ENCODE measurements at regions of chr3 and their contacts with region 1.

Region 1: GRCh38 chr3:117019082-117019713 is 309.6 kb downstream of the TUSC7 start:
- DNase-seq: peak; percentile 86 to 90
- H3K4me3 ChIP-seq: no peak overlapping the region
- H3K4me1 ChIP-seq: peaks cover 37% of the 10 kb centered on the region
- H3K27me3 ChIP-seq: no peaks in the 10 kb centered on the region

Region 2: DNA sequence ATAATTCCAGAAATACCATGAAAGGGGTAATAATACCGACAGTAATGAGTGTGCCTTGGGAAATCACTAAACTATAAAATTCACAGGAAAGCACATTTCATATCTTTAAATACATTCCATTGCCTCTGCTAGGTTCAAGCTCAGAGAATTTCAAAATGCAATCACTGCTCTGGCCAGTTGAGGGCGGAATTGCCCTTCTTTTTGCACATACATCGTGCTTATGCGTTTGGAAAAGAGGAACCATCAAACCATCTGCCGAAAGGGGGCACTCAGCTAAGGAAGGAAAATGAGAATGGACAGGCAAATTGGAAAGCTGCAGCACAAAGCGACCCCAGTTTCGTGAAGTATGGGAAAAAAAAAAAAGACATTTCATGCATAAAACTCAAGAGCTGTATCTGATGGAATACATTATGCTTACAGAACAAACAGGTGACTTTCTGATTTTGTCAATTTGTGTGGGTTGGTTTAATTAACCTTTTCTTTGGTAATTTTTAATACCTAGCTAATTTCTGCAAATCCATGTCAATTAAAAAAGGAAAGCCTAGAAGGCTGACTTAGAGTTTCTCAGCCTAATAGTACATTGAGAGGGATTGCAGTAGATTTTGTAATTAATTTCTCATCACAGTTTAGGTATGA is 248.3 kb before region 1 on chr3:
- in situ Hi-C with region 1: loop called (anchors 10 kb)
- DNase-seq: peak; percentile 88 to 89
- H3K4me3 ChIP-seq: no peak overlapping the region
- H3K4me1 ChIP-seq: peaks cover 4% of the 10 kb centered on the region; the same call in 1 of the 2 replicates
- H3K27me3 ChIP-seq: no peaks in the 10 kb centered on the region

Region 3: GRCh38 chr3:117355566-117355965 is 336.4 kb after region 1 on chr3:
- in situ Hi-C with region 1: loop called (anchors 5 kb)
- DNase-seq: peak; percentile 48 to 56
- H3K4me3 ChIP-seq: no peak overlapping the region
- H3K4me1 ChIP-seq: peaks cover 2% of the 10 kb centered on the region; the same call in 1 of the 2 replicates
- H3K27me3 ChIP-seq: no peaks in the 10 kb centered on the region

Region 4: DNA sequence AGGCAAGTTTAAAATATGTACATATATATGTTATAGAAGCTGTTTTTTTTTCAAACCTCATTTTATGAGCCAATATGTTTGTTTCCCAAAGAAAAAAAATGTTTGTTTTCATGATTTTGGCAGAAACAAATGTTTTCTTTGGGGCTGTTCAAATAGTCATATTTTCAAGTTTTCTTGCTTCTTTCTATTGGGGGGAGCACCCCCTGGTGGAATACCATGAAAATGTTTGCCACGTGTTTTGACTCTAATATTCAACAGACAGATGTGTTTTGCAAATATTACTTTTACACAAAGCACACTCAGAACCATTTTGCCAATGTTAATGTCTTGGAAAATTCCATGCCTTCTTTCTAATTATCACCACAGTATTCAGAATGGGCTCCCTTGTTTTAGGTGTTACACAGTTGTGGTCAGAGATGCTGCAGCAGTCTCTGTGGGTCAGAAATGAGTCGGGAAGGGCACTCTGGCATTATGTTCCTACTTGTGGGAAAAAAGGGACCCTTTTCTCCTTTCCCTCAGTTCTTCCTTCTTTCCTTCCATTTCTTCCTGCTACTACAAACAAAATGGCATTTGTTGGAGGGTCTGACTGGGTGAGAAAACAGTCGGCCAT is 507.4 kb after region 1 on chr3:
- in situ Hi-C with region 1: loop called (anchors 25 kb)
- DNase-seq: peak; percentile 27 to 62
- H3K4me3 ChIP-seq: no peak overlapping the region
- H3K4me1 ChIP-seq: no peaks in the 10 kb centered on the region
- H3K27me3 ChIP-seq: peaks cover under 1% of the 10 kb centered on the region; the same call in 1 of the 2 replicates